Activated CD4-positive, alpha-beta T cell treated with anti-CD3 and anti-CD28 coated beads for 36 hours (primary cell): ENCODE measurements at regions of chr3 and their contacts with region 1.

Region 1: GRCh38 chr3:3154879-3155610 is 24.4 kb downstream of the CRBN start:
- DNase-seq: no peak
- ATAC-seq: no peak
- H3K4me3 Mint-ChIP-seq: no peak overlapping the region
- H3K27ac Mint-ChIP-seq: peak overlapping the region; percentile 6
- H3K4me1 Mint-ChIP-seq: peaks cover 33% of the 10 kb centered on the region
- H3K27me3 Mint-ChIP-seq: no peaks in the 10 kb centered on the region

Region 2: DNA sequence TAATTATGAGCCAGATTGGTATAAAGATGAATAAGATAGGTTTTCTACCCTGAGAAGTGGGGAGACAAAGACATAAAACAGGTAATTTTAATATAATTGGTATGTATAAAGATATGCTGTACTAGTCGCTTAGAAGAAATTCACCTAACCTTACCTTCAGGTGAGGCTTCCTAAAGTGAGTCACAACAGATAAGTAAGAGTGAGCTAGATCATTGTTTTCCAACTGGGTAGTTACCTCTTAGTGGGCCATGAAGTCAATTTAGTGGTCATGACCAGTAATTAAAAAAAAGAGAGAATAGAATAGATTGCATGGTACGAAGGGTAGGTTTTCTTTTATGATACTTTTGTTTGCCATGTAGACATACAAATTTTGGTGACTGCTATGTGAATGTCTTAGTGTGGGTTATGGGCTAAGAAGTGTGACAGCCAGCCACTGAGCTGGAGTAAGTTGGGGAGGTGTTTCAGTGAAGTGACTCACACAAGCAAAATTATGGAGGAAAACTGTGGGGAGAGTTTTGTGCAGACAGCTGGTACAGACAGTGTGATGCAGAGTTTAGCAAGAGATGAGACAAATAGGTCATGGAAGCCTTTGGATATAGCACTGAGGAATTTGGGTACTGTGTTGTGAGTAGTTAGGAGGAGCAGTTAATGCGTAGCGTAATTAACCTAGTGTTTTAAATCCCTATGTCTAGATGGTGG is 20.1 kb before region 1 on chr3:
- CTCF ChIA-PET with region 1: interaction called, 3 read pairs
- POLR2A ChIA-PET with region 1: interaction called, 3 read pairs
- intact Hi-C with region 1: loop called in 1 of 2 experiments (anchors 2 kb)
- DNase-seq: peak; percentile 25
- ATAC-seq: peak; percentile 87
- H3K4me3 Mint-ChIP-seq: no peak overlapping the region
- H3K27ac Mint-ChIP-seq: peak overlapping the region; percentile 80
- H3K4me1 Mint-ChIP-seq: peaks cover 51% of the 10 kb centered on the region
- H3K27me3 Mint-ChIP-seq: no peaks in the 10 kb centered on the region

Region 3: GRCh38 chr3:3141939-3142338 is 13.1 kb before region 1 on chr3:
- CTCF ChIA-PET with region 1: interaction called, 12 read pairs
- POLR2A ChIA-PET with region 1: interaction called, 5 read pairs
- intact Hi-C with region 1: loop called in 1 of 2 experiments (anchors 1 kb)
- DNase-seq: no peak
- ATAC-seq: peak; percentile 70
- H3K4me3 Mint-ChIP-seq: no peak overlapping the region
- H3K27ac Mint-ChIP-seq: peak overlapping the region; percentile 52
- H3K4me1 Mint-ChIP-seq: peaks cover 20% of the 10 kb centered on the region
- H3K27me3 Mint-ChIP-seq: no peaks in the 10 kb centered on the region

Region 4: GRCh38 chr3:3552761-3553160 is 397.7 kb after region 1 on chr3:
- CTCF ChIA-PET with region 1: no interaction called
- POLR2A ChIA-PET with region 1: no interaction called
- intact Hi-C with region 1: no loop called
- DNase-seq: no peak
- ATAC-seq: no peak
- H3K4me3 Mint-ChIP-seq: no peak overlapping the region
- H3K27ac Mint-ChIP-seq: no peak overlapping the region
- H3K4me1 Mint-ChIP-seq: no peaks in the 10 kb centered on the region
- H3K27me3 Mint-ChIP-seq: no peaks in the 10 kb centered on the region